Activated CD8-positive, alpha-beta T cell treated with anti-CD3 and anti-CD28 coated beads for 36 hours (primary cell): ENCODE measurements at regions of chr16 and their contacts with region 1.

Region 1: GRCh38 chr16:2867987-2868789 is 10.2 kb upstream of the PRSS22 start:
- DNase-seq: peak; percentile 99
- ATAC-seq: peak; percentile 96
- H3K4me3 Mint-ChIP-seq: peak overlapping the region; percentile 89
- H3K27ac Mint-ChIP-seq: peak overlapping the region; percentile 95
- H3K4me1 Mint-ChIP-seq: peaks cover 9% of the 10 kb centered on the region
- H3K27me3 Mint-ChIP-seq: no peaks in the 10 kb centered on the region
- CTCF ChIP-seq: peak; percentile 98

Region 2: DNA sequence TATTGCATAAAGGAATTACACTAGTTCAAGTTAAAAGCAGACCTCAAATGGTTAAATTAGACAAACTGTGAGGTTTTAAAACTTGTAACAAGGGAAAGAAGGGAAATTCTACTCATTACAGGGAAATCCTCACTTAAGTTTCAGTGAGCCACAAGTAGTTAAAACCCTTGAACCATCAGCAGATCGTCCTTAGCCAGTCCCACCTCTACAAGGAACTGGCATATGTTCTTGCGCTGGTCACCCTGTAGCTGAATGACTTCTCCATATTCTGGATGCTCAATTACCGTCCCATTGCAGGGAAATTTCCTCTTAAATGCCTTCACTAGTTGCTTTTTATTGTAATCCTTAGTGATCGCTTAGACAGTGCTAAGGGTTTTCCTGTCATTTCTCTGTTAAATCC is 45.7 kb before region 1 on chr16:
- CTCF ChIA-PET with region 1: no interaction called
- POLR2A ChIA-PET with region 1: no interaction called
- intact Hi-C with region 1: no loop called
- DNase-seq: no peak
- ATAC-seq: no peak
- H3K4me3 Mint-ChIP-seq: no peak overlapping the region
- H3K27ac Mint-ChIP-seq: no peak overlapping the region
- H3K4me1 Mint-ChIP-seq: no peaks in the 10 kb centered on the region
- H3K27me3 Mint-ChIP-seq: no peaks in the 10 kb centered on the region
- CTCF ChIP-seq: no peak

Region 3: GRCh38 chr16:2838928-2839327 is 29.3 kb before region 1 on chr16:
- CTCF ChIA-PET with region 1: interaction called, 139 read pairs
- POLR2A ChIA-PET with region 1: interaction called, 10 read pairs
- intact Hi-C with region 1: no loop called
- DNase-seq: peak; percentile 77
- ATAC-seq: peak; percentile 74
- H3K4me3 Mint-ChIP-seq: no peak overlapping the region
- H3K27ac Mint-ChIP-seq: peak overlapping the region; percentile 14
- H3K4me1 Mint-ChIP-seq: peaks cover 19% of the 10 kb centered on the region
- H3K27me3 Mint-ChIP-seq: no peaks in the 10 kb centered on the region
- CTCF ChIP-seq: peak; percentile 95

Region 4: DNA sequence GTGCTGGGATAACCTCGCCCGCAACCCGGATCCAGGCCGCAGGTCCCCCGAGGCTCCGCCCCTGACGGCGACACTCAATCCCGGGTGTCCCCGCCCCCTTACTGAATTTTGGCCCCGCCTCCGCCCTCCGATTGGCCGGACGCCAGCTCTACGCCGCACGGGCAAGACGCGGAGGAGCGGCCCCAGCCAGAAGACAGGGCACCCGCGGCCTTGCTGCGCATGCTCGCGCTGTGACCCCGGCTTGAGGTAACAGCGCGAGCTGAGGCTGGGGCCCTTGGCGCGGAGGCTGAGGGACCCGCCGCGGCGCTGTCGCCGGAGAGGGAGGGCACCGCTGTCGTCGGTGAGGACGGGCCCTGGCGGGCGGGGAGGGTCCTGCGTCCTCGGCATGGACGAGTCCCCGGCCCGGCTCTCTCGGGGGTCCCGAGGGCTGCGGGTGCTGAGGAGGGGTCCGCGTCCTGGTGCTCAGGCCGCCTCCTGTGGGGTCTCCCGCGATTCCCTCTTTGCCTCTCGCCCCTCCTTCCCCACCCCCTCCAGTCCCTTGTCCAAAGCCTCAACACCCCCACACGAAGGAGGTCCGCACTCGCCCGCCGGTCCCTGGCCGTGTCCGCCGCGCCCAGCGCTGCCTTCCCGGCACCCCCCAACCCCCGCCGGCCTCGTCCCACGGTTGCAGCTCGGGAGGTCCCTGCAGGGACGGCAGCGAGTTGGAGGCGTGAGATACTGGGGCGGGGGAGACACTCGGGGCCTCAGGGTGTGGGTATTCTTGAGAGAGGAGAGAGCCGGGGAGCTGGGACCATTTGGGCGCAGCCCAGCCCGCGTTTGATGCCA is 15.1 kb after region 1 on chr16 and contains the start of gene FLYWCH2:
- CTCF ChIA-PET with region 1: interaction called, 19 read pairs
- POLR2A ChIA-PET with region 1: interaction called, 12 read pairs
- intact Hi-C with region 1: no loop called
- DNase-seq: peak; percentile 99
- ATAC-seq: peak; percentile 84
- H3K4me3 Mint-ChIP-seq: peak within 1 kb of the TSS; percentile 89
- H3K27ac Mint-ChIP-seq: peak within 1 kb of the TSS; percentile 91
- H3K4me1 Mint-ChIP-seq: peaks cover 13% of the 10 kb centered on the region
- H3K27me3 Mint-ChIP-seq: no peaks in the 10 kb centered on the region
- CTCF ChIP-seq: no peak
- total RNA-seq, gene FLYWCH2: 18.9 to 19.3 TPM

Region 5: GRCh38 chr16:2911580-2912329 is 43.6 kb after region 1 on chr16 and contains the start of gene FLYWCH1:
- CTCF ChIA-PET with region 1: interaction called, 15 read pairs
- POLR2A ChIA-PET with region 1: no interaction called
- intact Hi-C with region 1: no loop called
- DNase-seq: peak; percentile 99
- ATAC-seq: peak; percentile 99
- H3K4me3 Mint-ChIP-seq: peak within 1 kb of the TSS; percentile 85
- H3K27ac Mint-ChIP-seq: peak within 1 kb of the TSS; percentile 81
- H3K4me1 Mint-ChIP-seq: peaks cover 27% of the 10 kb centered on the region
- H3K27me3 Mint-ChIP-seq: no peaks in the 10 kb centered on the region
- CTCF ChIP-seq: no peak
- total RNA-seq, gene FLYWCH1: 33.4 to 34.9 TPM

Region 6: DNA sequence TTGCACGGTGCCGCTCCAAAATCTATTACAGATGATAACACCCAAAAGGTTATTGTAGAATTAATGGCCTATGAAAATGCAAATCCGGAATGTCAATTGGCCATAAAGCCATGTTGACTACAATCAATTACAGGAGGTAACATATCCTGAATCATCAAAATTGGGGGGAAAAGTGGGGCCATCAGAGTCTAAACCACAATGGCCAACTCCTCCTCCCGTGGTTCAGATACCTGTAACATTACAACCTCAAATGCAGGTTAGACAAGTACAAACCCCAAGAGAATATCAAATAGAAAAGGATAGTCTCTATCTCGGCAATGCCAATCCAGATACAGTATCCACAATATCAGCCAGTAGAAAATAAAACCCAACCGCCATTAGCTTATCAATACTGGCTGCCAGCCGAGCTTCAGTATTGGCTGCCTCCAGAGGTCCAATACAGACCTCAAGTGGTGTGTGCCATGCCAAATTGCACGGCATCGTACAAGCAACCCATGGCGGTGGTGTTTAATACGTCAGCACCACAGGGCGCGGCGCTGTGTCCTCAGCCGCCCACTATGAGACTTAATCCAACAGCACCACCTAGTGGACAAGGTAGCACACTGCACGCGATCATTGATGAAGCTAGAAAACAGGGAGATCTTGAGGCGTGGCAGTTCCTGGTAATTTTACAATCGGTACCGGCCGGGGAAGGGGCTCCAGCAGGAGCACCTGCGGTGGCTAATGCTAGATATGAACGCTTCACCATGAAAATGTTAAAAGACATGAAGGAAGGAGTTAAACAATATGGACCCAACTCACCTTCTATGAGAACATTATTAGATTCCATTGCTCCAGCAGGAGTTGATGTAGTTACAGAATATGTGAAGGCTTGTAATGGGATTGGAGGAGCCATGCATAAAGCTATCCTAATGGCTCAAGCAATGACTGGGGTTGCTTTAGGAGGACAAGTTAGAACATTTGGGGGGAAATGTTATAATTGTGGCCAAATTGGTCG is 58.8 kb after region 1 on chr16:
- CTCF ChIA-PET with region 1: interaction called, 61 read pairs
- POLR2A ChIA-PET with region 1: interaction called, 4 read pairs
- intact Hi-C with region 1: no loop called
- DNase-seq: peak; percentile 95
- ATAC-seq: peak; percentile 99
- H3K4me3 Mint-ChIP-seq: no peak overlapping the region
- H3K27ac Mint-ChIP-seq: no peak overlapping the region
- H3K4me1 Mint-ChIP-seq: peaks cover 10% of the 10 kb centered on the region
- H3K27me3 Mint-ChIP-seq: no peaks in the 10 kb centered on the region
- CTCF ChIP-seq: peak; percentile 96